Stomach (tissue), 19 donors: ENCODE measurements at regions of chr19 and their contacts with region 1.

Region 1: GRCh38 chr19:15555759-15556633 is 47.7 kb downstream of the CYP4F22 start:
- DNase-seq: peak; percentile 88 to 95
- H3K4me3 ChIP-seq: peak overlapping the region; percentile 31 to 47 (median 35)
- H3K27ac ChIP-seq: peak overlapping the region in 3 of 5 donors; percentile 42 to 68 (median 44)
- H3K4me1 ChIP-seq: peaks cover 15 to 25% (median 18%) of the 10 kb centered on the region in 4 donors
- H3K27me3 ChIP-seq: peaks cover 0 to 84% (median 12%) of the 10 kb centered on the region in 3 donors
- CTCF ChIP-seq: peak in 5 of 7 experiments; percentile 52 to 90 (median 68)
- EP300 ChIP-seq: no peak
- POLR2A ChIP-seq: no peak

Region 2: DNA sequence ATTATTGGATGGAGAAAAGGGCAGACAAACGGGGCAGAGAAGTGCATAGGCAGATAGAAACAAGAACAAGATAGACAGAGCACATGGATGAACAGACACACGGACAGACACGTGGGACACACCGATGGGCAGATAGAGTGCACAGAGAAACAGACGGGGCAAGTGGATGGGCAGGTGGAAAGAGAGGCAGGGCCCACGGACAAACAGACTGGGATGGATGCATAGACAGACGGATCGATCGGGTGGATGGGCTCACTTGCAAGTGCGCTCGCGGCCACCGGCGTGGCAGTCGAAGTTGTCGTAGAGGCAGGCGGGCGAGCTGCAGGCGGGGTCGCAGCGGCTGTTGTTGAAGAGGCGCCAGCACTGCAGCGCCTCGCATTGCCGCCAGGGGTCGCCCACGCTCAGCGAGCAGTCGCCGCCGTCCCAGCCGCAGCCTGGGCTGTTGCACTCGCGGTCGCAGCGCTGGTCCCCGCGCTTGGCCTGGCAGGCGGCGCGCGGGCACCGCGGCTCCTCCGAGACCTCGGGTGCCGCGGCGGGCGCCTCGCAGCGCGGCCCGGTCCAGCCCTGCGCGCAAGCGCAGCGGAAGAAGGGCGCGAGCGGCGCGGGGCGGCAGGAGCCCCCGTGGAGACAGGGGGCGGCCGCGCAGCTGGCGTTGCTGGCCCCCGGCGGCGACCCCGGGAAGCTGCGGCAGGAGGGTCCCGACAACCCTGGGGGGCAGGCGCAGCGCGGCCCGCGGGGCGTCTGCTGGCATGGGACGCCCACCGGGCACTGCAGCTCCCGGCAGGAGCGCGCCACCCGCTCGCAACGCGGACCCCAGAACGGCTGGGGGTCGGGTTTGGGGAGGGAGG is 378.5 kb before region 1 on chr19:
- intact Hi-C with region 1: loop called (anchors 5 kb)
- DNase-seq: peak; percentile 88 to 96
- H3K4me3 ChIP-seq: peak overlapping the region; percentile 11 to 37 (median 34)
- H3K27ac ChIP-seq: peak overlapping the region in 1 of 5 donors; percentile 29
- H3K4me1 ChIP-seq: peaks cover 8 to 15% (median 9%) of the 10 kb centered on the region in 4 donors
- H3K27me3 ChIP-seq: peaks cover 0 to 16% (median 7%) of the 10 kb centered on the region in 3 donors
- CTCF ChIP-seq: peak in 6 of 7 experiments; percentile 38 to 100 (median 96)
- EP300 ChIP-seq: no peak
- POLR2A ChIP-seq: no peak

Region 3: DNA sequence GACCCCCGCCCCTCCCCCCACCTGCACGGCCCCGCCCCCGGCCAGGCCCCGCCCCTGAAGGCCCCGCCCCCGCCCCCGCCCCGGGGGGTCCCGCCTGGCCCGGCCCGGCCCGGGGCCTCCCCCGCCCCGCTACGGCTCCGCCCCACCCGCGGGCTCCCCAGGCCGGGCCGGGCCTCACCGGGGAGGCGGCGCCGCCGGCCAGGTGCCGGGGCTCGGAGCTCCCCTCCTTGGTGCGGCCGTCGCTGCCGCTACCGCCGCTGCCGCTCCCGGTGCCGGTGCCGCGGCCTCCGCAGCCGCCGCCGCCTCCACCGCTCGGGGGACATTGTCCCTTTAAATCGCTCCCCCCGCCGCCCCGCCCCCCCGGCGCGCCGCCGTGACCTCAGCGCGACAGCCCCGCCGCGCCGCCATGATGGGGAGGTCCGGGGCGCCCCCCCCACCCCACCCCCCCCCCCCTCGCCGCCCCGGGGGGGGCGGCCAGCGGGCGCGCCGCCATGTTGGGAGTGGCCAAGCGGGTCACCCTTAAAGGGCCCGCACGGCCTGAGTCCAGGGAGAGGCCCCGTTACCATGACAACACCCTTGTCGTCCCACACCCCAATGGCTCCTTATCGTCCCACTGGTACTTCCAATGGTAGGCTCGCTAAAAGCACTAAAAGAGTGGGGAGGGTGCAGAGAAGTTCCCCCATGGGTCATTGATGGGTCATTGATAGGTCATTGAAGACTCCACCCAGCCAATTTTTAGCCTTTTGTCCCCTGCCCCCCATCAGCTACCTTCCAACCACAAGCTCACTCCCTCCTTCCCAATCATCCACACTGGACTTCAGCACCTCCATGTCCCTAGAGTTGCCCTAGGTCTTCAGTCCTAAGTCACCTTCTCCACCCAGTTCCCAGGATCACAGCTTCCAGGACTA is 106.1 kb before region 1 on chr19 and contains the start of gene WIZ:
- intact Hi-C with region 1: loop called (anchors 10 kb)
- DNase-seq: peak; percentile 88 to 92
- H3K4me3 ChIP-seq: peak within 1 kb of the TSS; percentile 69 to 83 (median 74)
- H3K27ac ChIP-seq: peak within 1 kb of the TSS; percentile 65 to 89 (median 85)
- H3K4me1 ChIP-seq: peaks cover 22 to 42% (median 38%) of the 10 kb centered on the region in 4 donors
- H3K27me3 ChIP-seq: peaks cover 0 to 14% (median 0%) of the 10 kb centered on the region in 3 donors
- CTCF ChIP-seq: no peak
- EP300 ChIP-seq: no peak
- POLR2A ChIP-seq: no peak
- total RNA-seq, gene WIZ: 15.2 to 124 (median 60.3) TPM

Region 4: GRCh38 chr19:15640294-15640903 is 84.4 kb after region 1 on chr19 and contains the start of gene CYP4F3:
- intact Hi-C with region 1: no loop called
- DNase-seq: peak; percentile 91 to 95
- H3K4me3 ChIP-seq: no peak within 1 kb of the TSS
- H3K27ac ChIP-seq: peak within 1 kb of the TSS; percentile 55 to 76 (median 72)
- H3K4me1 ChIP-seq: peaks cover 7 to 28% (median 12%) of the 10 kb centered on the region in 4 donors
- H3K27me3 ChIP-seq: no peaks in the 10 kb centered on the region
- CTCF ChIP-seq: no peak
- EP300 ChIP-seq: no peak
- POLR2A ChIP-seq: no peak
- total RNA-seq, gene CYP4F3: 4.9 to 100 (median 20.6) TPM